H1 (cell line): ENCODE measurements at regions of chr12 and their contacts with region 1.

Region 1: DNA sequence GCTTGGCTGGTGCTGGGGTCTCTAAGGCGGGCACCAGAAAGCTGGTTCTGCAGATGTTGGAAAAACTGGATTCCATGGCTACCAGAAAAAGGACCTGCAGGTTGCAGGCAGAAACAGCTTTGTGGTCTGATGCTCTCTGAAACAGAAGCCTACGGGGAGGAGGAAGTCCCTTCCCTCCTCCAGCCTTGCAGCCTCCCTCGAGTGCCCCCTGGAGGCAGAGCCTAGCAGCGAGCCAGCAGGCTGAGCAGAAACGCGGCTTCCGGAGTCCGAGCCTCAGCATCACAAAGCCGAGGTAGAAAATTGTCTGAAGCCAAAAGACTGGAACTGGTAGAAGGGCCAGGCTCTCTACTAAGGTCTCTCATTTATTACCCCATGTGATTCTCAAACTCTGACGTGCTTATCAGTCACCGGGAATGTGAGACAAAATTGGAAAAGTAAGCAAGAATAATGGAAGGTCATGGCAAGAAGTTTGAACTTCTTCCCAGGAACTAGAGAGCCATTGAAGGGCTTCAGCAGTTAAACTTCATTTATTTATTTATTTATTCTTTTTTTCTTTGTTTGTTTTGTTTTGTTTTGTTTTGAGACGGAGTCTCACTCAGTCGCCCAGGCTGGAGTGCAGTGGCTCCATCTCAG is 82.2 kb upstream of the CPSF6 start:
- DNase-seq: peak; percentile 77 to 97
- H3K4me3 ChIP-seq: no peak overlapping the region
- H3K27ac ChIP-seq: no peak overlapping the region
- H3K4me1 ChIP-seq: peaks cover 0 to 2% (median under 1%) of the 10 kb centered on the region in 4 experiments; a peak in 1 of 7 replicates
- H3K27me3 ChIP-seq: no peaks in the 10 kb centered on the region
- CTCF ChIP-seq: peak; percentile 93 to 99 (median 95)
- EP300 ChIP-seq: no peak
- POLR2A ChIP-seq: 0 out of 3 replicates have a peak, but pooled peaks of 1 of the 2 experiments have one; percentile 46
- RAD21 ChIP-seq: peak; percentile 73 to 79

Region 2: DNA sequence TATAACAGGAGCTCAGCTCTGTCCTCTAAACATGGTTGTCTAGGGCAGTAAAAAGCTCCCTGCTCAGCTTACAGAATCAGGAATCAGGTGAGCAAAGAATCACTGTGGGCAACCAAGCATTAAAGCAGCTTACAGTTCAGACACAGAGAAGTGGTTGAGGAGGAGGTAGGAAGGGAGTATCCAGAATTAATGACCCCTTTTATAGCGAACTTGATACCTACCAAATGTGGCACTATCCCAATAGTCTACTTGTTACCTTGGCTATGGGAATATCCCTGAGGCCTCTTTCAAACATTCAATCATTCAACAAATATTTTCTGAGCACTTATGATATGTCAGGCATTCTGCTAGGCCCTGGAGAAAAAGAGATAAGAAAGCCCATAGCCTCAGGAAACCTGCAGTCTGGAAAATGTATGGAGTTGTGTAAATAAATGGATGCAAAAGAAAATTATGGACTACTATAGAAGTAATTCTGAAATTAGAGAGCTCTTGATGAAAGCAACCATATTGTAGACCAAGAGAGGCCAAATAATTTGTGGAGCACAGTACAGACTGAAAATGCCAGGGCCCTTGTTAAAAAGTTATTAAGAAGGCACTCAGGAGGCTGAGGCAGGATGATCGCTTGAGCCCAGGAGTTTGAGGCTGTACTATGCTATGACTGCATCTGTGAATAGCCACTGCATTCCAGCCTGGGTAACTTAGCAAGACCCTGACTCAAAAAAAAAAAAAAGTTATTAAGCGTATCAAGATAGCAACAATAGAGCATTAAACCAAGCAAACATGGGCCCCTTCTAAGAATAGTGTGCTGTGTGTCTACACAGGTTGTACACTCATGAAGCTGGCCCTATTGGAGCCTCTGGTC is 51.8 kb before region 1 on chr12:
- CTCF ChIA-PET with region 1: interaction called, 14 read pairs
- POLR2A ChIA-PET with region 1: no interaction called
- DNase-seq: no peak
- H3K4me3 ChIP-seq: no peak overlapping the region
- H3K27ac ChIP-seq: no peak overlapping the region
- H3K4me1 ChIP-seq: peaks cover 0 to 6% (median 1%) of the 10 kb centered on the region in 4 experiments; a peak in 3 of 7 replicates
- H3K27me3 ChIP-seq: no peaks in the 10 kb centered on the region
- CTCF ChIP-seq: no peak
- EP300 ChIP-seq: no peak
- POLR2A ChIP-seq: no peak
- RAD21 ChIP-seq: no peak

Region 3: DNA sequence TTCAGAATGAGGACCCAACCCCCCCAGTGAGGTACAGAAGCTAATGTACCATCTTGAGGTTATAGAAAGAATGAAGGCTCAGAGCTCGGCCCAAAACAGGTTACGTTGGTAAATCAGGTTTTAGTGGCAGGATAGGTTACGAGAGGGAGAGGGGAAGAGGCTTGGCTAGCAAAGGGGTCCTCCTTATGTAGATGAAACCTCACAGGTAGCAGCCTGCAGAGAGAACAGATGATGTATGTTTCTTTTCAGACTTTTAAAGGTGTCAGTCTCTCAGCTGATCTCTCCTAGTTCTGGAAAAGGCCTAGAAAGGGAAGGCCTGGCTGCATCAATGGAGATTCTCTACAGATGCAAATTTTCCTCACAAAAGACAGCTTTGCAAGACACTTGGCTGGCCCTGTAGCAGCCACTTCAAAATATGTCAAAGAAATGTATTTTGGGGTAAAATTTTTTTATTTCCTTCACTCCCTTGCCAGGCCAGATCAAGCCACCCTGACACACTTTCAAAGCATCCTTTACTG is 10.6 kb after region 1 on chr12:
- CTCF ChIA-PET with region 1: interaction called, 53 read pairs
- POLR2A ChIA-PET with region 1: interaction called, 4 read pairs
- DNase-seq: no peak
- H3K4me3 ChIP-seq: no peak overlapping the region
- H3K27ac ChIP-seq: no peak overlapping the region
- H3K4me1 ChIP-seq: peaks cover 2 to 15% (median 10%) of the 10 kb centered on the region in 4 experiments
- H3K27me3 ChIP-seq: no peaks in the 10 kb centered on the region
- CTCF ChIP-seq: no peak
- EP300 ChIP-seq: no peak
- POLR2A ChIP-seq: no peak
- RAD21 ChIP-seq: no peak

Region 4: GRCh38 chr12:69239352-69239921 is 82.3 kb after region 1 on chr12 and contains the start of gene CPSF6:
- CTCF ChIA-PET with region 1: interaction called, 23 read pairs
- POLR2A ChIA-PET with region 1: interaction called, 9 read pairs
- DNase-seq: peak; percentile 70 to 95
- H3K4me3 ChIP-seq: peak within 1 kb of the TSS; percentile 74 to 99 (median 88)
- H3K27ac ChIP-seq: peak within 1 kb of the TSS; percentile 94
- H3K4me1 ChIP-seq: peaks cover 0 to 10% (median 5%) of the 10 kb centered on the region in 4 experiments; a peak in 5 of 7 replicates
- H3K27me3 ChIP-seq: peaks cover 0 to 1% (median 0%) of the 10 kb centered on the region in 4 experiments; a peak in 1 of 7 replicates
- CTCF ChIP-seq: no peak
- EP300 ChIP-seq: peak in 1 of 2 experiments; percentile 83; a peak in 1 of 3 replicates
- POLR2A ChIP-seq: peak; percentile 84 to 97
- RAD21 ChIP-seq: no peak
- total RNA-seq, gene CPSF6: 156 and 167 TPM in 2 replicates

Region 5: GRCh38 chr12:69266036-69266635 is 109.0 kb after region 1 on chr12:
- CTCF ChIA-PET with region 1: interaction called, 16 read pairs
- POLR2A ChIA-PET with region 1: no interaction called
- DNase-seq: no peak
- H3K4me3 ChIP-seq: no peak overlapping the region
- H3K27ac ChIP-seq: no peak overlapping the region
- H3K4me1 ChIP-seq: no peaks in the 10 kb centered on the region
- H3K27me3 ChIP-seq: no peaks in the 10 kb centered on the region
- CTCF ChIP-seq: no peak
- EP300 ChIP-seq: no peak
- POLR2A ChIP-seq: no peak
- RAD21 ChIP-seq: no peak

Region 6: DNA sequence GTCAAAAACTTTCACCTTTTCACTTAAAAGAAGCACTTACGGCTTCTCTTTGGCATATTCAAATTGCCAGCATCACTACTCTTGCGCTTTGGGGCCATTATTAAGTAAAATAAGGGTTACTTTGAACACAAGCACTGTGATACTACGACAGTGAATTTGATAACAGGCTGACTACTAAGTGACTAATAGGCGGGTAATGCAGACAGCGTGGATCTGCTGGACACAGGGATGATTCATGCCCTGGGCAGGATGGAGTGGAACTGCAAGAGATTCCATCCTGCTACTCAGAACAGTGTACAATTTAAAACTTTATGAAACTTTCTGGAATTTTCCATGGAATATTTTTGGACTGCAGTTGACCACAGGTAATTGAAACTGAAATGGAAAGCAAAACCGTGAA is 248.3 kb after region 1 on chr12:
- CTCF ChIA-PET with region 1: no interaction called
- POLR2A ChIA-PET with region 1: no interaction called
- DNase-seq: no peak
- H3K4me3 ChIP-seq: no peak overlapping the region
- H3K27ac ChIP-seq: no peak overlapping the region
- H3K4me1 ChIP-seq: no peaks in the 10 kb centered on the region
- H3K27me3 ChIP-seq: no peaks in the 10 kb centered on the region
- CTCF ChIP-seq: no peak
- EP300 ChIP-seq: no peak
- POLR2A ChIP-seq: no peak
- RAD21 ChIP-seq: no peak